Heart right ventricle (tissue), 16 donors: ENCODE measurements at regions of chr9 and their contacts with region 1.

Region 1: DNA sequence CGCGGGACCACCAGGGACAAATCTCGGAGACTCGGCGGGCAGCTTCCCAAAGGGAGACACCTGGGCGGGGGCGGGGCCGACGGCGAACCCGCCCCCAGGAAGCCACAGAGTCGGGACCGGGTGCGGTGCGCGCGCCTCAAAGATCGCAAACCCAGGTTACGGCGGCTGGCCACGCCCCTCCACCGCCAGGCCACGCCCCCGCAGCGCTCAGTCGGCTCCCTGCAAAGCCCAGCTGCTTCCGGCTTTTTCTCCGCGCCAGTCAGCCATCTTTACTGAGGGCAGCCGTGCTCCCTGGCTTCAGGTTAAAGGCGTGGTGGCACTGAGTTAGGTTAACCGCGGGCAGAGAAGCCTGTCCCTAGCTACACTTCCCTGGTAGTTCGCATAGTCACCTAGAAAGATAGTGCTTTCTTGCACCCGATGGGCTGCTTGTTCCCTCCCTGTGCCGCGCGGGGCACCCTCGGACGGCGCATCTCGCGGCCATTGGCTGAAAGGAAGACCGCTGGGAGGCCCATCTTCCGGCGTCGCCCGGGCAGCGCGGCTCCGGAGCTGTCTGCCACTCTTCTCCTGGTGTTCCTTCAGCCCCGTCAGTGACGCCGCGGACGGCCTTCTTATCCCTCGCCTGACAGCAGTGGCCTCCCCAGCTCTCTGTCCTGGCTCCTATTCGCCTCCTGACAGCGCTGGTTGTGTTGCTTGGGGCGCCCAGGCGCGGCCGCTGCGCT is at the start of gene TBC1D2:
- DNase-seq: peak; percentile 96
- ATAC-seq: peak; percentile 97 to 99 (median 98)
- H3K4me3 ChIP-seq: peak within 1 kb of the TSS; percentile 51 to 96 (median 83)
- H3K27ac ChIP-seq: peak within 1 kb of the TSS; percentile 80 to 99 (median 94)
- H3K4me1 ChIP-seq: peaks cover 3 to 53% (median 15%) of the 10 kb centered on the region in 9 donors
- H3K27me3 ChIP-seq: no peaks in the 10 kb centered on the region
- CTCF ChIP-seq: peak in 4 of 9 donors; percentile 24 to 40 (median 31)
- total RNA-seq, gene TBC1D2: 0.49 to 4.3 (median 1.7) TPM

Region 2: GRCh38 chr9:97703437-97704344 is 552.0 kb before region 1 on chr9:
- intact Hi-C with region 1: loop called in 2 of 10 experiments (anchors 5 to 10 kb)
- DNase-seq: no peak
- ATAC-seq: peak in 2 of 8 donors; percentile 32 to 62
- H3K4me3 ChIP-seq: no peak overlapping the region
- H3K27ac ChIP-seq: no peak overlapping the region
- H3K4me1 ChIP-seq: peaks cover 0 to 12% (median 0%) of the 10 kb centered on the region in 9 donors
- H3K27me3 ChIP-seq: peaks cover 0 to 26% (median 2%) of the 10 kb centered on the region in 7 donors
- CTCF ChIP-seq: no peak

Region 3: GRCh38 chr9:97982683-97983588 is 272.8 kb before region 1 on chr9 and contains the start of gene ANP32B:
- intact Hi-C with region 1: loop called in 1 of 10 experiments (anchors 5 kb)
- DNase-seq: peak; percentile 90 to 92
- ATAC-seq: peak; percentile 88 to 95 (median 93)
- H3K4me3 ChIP-seq: peak within 1 kb of the TSS; percentile 75 to 100 (median 96)
- H3K27ac ChIP-seq: peak within 1 kb of the TSS; percentile 95 to 100 (median 98)
- H3K4me1 ChIP-seq: peaks cover 0 to 62% (median 44%) of the 10 kb centered on the region in 9 donors
- H3K27me3 ChIP-seq: no peaks in the 10 kb centered on the region
- CTCF ChIP-seq: peak; percentile 73 to 99 (median 91)
- total RNA-seq, gene ANP32B: 48.2 to 68.2 (median 56.9) TPM

Region 4: DNA sequence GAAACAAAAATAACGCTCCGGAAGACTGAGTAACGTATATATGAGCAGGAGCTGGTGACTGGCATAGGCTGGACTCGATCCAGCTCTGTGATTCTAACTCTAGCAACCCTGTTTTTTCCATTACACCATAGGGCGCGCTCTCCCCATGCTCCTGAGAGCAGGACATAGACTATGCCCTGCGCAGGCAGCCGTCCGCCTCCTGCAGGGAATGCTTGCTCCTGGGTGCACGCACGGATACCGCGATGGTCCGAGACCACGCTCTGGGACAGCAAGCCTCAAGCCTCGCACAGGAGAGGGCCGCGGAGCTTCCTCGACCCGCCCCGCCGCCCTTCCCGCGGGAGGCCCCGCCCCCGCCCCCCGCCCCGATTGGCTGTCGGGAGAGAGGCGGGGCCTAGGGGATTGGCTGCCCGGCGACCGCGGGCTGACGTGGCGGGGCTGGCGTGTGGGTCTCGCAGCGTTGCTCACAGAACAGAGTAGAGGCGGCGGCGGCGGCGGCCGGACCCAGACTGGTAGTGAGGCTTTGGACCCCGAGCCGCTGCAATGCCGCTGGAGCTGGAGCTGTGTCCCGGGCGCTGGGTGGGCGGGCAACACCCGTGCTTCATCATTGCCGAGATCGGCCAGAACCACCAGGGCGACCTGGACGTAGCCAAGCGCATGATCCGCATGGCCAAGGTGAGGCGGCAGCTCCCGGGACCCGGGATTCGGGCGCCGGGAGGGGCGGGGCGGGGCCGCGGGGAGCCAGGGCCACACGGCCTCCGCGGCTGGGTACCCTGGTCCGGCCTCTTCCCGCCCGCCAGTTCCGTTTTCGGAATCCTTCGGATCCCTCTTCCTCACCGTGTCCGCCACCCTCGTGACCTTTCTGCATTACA is 199.2 kb before region 1 on chr9 and contains the start of gene NANS:
- intact Hi-C with region 1: loop called in 2 of 10 experiments (anchors 5 to 10 kb)
- DNase-seq: peak; percentile 92 to 93
- ATAC-seq: peak; percentile 98 to 100 (median 99)
- H3K4me3 ChIP-seq: peak within 1 kb of the TSS; percentile 50 to 96 (median 84)
- H3K27ac ChIP-seq: peak within 1 kb of the TSS; percentile 63 to 97 (median 92)
- H3K4me1 ChIP-seq: peaks cover 0 to 36% (median 14%) of the 10 kb centered on the region in 9 donors
- H3K27me3 ChIP-seq: no peaks in the 10 kb centered on the region
- CTCF ChIP-seq: peak in 2 of 9 donors; percentile 19
- total RNA-seq, gene NANS: 20.0 to 43.7 (median 30.0) TPM

Region 5: GRCh38 chr9:98215821-98216220 is 39.9 kb before region 1 on chr9:
- intact Hi-C with region 1: loop called in 1 of 10 experiments (anchors 5 kb)
- DNase-seq: no peak
- ATAC-seq: peak in 1 of 8 donors; percentile 41
- H3K4me3 ChIP-seq: no peak overlapping the region
- H3K27ac ChIP-seq: no peak overlapping the region
- H3K4me1 ChIP-seq: no peaks in the 10 kb centered on the region
- H3K27me3 ChIP-seq: no peaks in the 10 kb centered on the region
- CTCF ChIP-seq: peak in 5 of 9 donors; percentile 14 to 36 (median 28)